ENCODE measurements at regions of chr9 and their contacts with region 1.

Region 1: GRCh38 chr9:129549685-129550084 is 71.2 kb downstream of the C9orf50 start:
- DNase-seq: no peak
- H3K4me3 ChIP-seq: peak overlapping the region in 1 of 3 experiments; percentile 34
- H3K27ac ChIP-seq: no peak overlapping the region
- H3K4me1 ChIP-seq: no peaks in the 10 kb centered on the region
- H3K27me3 ChIP-seq: peaks cover 5% of the 10 kb centered on the region
- CTCF ChIP-seq: no peak

Region 2: GRCh38 chr9:129509522-129510270 is 40.0 kb before region 1 on chr9:
- CTCF ChIA-PET with region 1: no interaction called
- dilution Hi-C with region 1: loop called (anchors 5 kb)
- in situ Hi-C with region 1: no loop called
- intact Hi-C with region 1: no loop called
- DNase-seq: peak; percentile 56
- H3K4me3 ChIP-seq: no peak overlapping the region
- H3K27ac ChIP-seq: no peak overlapping the region
- H3K4me1 ChIP-seq: no peaks in the 10 kb centered on the region
- H3K27me3 ChIP-seq: no peaks in the 10 kb centered on the region
- CTCF ChIP-seq: no peak

Region 3: GRCh38 chr9:129524582-129525270 is 25.0 kb before region 1 on chr9:
- CTCF ChIA-PET with region 1: no interaction called
- dilution Hi-C with region 1: no loop called
- in situ Hi-C with region 1: no loop called
- intact Hi-C with region 1: no loop called
- DNase-seq: no peak
- H3K4me3 ChIP-seq: no peak overlapping the region
- H3K27ac ChIP-seq: no peak overlapping the region
- H3K4me1 ChIP-seq: peaks cover 3% of the 10 kb centered on the region
- H3K27me3 ChIP-seq: no peaks in the 10 kb centered on the region
- CTCF ChIP-seq: no peak

Region 4: GRCh38 chr9:129584136-129584535 is 34.5 kb after region 1 on chr9:
- CTCF ChIA-PET with region 1: no interaction called
- dilution Hi-C with region 1: loop called (anchors 5 kb)
- in situ Hi-C with region 1: no loop called
- intact Hi-C with region 1: no loop called
- DNase-seq: peak; percentile 64
- H3K4me3 ChIP-seq: no peak overlapping the region
- H3K27ac ChIP-seq: no peak overlapping the region
- H3K4me1 ChIP-seq: no peaks in the 10 kb centered on the region
- H3K27me3 ChIP-seq: peaks cover 2% of the 10 kb centered on the region
- CTCF ChIP-seq: no peak